OCI-LY7 (cell line): ENCODE measurements at regions of chr11 and their contacts with region 1.

Region 1: DNA sequence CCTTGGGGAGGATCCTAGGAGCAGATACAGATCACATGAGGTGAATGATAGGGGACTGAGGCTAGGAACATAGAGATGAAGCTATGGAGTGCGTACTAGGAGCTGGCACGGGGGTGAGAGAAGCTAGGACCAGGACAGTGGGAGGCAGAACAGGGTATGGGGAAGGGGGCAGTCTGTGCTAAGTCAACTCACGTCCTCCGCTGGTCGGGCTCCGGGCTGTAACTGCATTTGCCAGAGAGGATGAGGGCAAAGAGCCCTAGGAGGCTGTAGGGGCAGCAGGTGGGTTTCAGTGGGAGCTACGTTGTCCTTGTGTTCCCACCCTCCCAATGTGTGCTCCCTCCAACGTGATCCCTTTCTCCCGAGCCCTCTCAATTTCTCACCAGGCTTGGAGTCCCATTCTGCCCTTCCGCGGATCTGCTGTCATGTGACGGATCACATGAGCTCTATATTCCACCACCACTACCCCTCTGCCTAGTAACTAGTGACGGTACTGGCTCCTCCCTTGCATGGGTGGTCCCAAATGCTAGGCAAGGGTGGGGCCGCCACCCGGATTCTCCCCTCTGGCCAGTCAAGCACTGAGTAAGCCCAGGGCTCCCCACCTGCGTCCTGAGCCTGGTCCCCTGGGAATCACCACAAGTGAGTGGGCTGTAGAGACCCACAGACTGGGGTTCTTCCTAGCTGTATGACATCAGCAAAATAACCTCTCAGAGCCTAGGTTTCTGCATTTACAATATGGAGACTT is at the start of gene TPP1:
- DNase-seq: peak; percentile 94
- H3K4me3 ChIP-seq: peak within 1 kb of the TSS; percentile 87
- H3K27ac ChIP-seq: no peak within 1 kb of the TSS
- H3K4me1 ChIP-seq: peaks cover 32% of the 10 kb centered on the region
- CTCF ChIP-seq: no peak
- total RNA-seq, gene TPP1: 11.9 and 16.6 TPM in 2 replicates

Region 2: DNA sequence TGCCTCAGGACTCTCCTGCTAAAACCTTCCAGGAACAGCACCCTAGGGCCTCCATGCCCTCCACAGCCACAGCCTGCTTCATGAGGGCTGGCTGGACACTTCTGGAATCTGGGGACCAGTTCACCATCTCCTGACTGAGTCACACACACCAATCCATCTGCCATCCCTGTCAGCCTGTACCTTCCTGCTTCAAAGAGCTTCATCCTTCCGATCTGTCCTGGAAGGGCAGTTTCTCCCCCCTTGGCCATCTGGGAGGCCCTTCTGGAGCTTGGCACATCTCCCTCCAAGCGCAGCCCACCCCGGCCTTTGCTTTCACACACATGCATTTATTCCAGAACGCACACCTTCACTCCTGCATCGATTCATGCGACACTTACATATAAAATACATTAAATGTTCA is 213.3 kb before region 1 on chr11:
- CTCF ChIA-PET with region 1: no interaction called
- POLR2A ChIA-PET with region 1: no interaction called
- intact Hi-C with region 1: no loop called
- DNase-seq: no peak
- H3K4me3 ChIP-seq: no peak overlapping the region
- H3K27ac ChIP-seq: no peak overlapping the region
- H3K4me1 ChIP-seq: peaks cover 60% of the 10 kb centered on the region
- CTCF ChIP-seq: no peak

Region 3: DNA sequence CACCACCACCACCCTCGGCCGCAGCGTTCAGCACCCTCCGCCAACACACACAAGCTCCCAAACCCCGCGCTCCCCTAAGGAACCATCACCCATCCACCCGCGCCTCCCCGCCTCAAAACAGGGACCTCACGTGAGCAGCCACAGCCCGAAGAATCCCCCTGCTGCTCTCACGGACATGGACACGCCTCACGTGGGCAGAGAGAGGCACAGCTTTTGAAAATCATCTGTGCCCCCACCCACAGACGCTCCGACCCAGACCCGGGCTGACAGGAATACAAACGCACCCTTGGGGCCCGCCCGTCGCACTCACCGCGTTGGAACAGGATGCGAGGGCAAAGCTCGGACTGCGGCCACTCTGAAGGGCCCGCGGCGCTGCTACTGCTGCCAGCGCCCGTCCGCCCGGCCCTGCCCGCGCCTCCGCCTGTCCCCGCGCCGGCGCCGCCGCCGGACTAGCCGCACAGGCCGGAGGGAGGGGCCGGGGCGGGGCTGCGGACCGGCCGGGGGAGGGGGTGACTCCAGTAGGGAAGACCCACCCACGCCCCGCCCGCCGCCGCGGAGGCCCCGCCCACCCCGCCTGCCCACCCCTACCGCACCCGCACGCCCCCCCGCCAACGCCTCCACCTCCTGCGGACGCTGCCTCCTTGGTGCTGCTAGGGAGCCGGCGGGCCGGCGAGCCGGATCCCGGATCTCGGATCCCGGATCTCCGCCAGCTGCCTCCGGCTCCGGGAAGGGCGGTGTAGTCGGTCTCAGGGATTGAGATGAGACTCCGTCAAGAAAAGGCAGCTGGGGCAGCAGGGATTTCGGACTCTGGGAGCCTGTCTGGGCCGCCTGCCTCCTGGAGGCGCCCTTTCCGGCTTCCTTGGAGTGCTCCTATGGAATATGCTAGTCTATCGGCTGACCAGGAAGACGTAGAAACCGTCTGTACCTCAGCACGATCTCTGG is 145.4 kb before region 1 on chr11 and contains the start of gene TRIM3:
- CTCF ChIA-PET with region 1: interaction called, 3 read pairs
- POLR2A ChIA-PET with region 1: interaction called, 10 read pairs
- intact Hi-C with region 1: no loop called
- DNase-seq: peak; percentile 81
- H3K4me3 ChIP-seq: peak within 1 kb of the TSS; percentile 73
- H3K27ac ChIP-seq: no peak within 1 kb of the TSS
- H3K4me1 ChIP-seq: peaks cover 31% of the 10 kb centered on the region
- CTCF ChIP-seq: no peak
- total RNA-seq, gene TRIM3: 8.5 and 21.3 TPM in 2 replicates

Region 4: DNA sequence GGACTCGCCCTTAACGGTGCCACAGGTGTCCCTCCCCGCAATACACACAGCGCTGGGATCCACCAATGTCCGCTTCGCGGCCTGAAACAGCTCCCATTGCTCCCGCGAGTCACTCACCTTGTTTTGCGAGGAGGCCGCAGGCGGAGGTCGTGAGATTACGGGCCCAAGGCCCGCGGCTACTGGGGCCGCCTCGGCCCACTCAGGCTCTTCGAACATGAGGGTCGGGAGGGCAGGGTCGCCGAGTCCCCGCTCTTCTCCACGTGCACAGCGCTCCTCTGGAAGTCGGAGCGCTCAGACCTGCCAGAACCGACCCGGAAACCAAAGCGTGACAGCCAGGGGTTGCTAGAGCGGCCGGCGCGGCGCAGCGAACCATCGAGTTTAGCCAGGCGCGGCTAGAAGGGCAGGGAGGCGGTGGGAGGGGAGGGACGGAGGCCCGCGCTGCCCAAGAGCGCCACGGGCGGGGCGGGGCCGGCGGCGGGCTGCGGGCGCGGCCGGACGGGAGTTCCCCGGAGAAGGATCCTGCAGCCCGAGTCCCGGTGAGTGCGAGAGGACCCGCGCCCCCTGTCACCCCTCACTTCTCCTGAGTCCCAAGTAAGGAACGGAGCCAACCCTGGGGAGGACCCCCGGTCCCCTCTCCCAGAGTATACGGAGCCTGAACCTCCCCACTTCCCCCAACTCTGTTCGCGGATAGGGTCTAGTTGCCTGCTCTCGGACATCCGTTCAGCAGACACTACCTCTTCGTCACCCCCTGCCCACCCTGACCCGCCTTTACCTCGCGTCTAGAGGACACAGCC is 15.7 kb before region 1 on chr11 and contains the starts of genes ILK and RRP8:
- CTCF ChIA-PET with region 1: interaction called, 3 read pairs
- POLR2A ChIA-PET with region 1: interaction called, 10 read pairs
- intact Hi-C with region 1: no loop called
- DNase-seq: peak; percentile 90
- H3K4me3 ChIP-seq: peak within 1 kb of the TSS; percentile 91
- H3K27ac ChIP-seq: peak within 1 kb of the TSS; percentile 67
- H3K4me1 ChIP-seq: peaks cover 47% of the 10 kb centered on the region
- CTCF ChIP-seq: 0 out of 2 replicates have a peak, but pooled peaks have one; percentile 18
- total RNA-seq, gene ILK: 52.0 and 64.8 TPM in 2 replicates
- total RNA-seq, gene RRP8: 26.4 and 29.4 TPM in 2 replicates

Region 5: DNA sequence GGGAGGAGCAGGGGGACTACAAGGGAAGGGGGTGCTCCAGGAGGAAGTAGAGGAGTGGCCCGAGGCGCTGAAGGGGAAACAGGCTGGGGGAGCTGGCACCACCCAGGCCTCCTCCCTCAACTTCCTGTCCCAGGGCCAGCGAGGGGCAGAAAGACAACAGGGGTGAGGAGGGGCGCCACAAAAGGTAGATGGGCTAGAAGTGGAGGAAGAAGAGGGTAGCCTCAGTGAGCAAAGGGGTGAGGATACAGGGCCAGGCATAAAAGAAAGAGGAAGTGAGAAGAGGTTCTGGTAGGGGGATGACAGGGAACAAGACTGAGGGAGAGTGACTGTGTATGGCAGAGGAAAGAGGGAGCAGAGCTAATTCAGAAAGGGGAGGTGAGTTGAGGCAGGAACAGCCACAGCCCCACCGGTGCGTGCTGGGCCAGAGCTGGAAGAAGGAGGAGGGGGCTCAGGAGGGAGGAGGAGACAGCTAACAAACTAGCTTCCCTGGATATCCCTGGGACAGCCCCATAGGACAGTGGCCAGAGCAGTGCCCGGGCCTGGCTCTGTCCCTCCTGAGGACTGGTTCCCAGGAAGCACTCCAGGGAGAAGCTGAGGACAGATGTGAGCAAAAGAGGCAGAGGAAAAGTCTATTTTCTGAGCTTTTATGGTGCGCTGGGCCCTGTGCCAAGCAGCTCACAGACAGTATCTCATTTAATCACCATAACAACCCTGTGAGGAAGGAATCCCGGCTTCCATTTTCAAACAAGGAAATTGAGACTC is 27.9 kb after region 1 on chr11:
- CTCF ChIA-PET with region 1: interaction called, 4 read pairs
- POLR2A ChIA-PET with region 1: interaction called, 13 read pairs
- intact Hi-C with region 1: no loop called
- DNase-seq: peak; percentile 73
- H3K4me3 ChIP-seq: peak overlapping the region; percentile 48
- H3K27ac ChIP-seq: peak overlapping the region; percentile 59
- H3K4me1 ChIP-seq: peaks cover 25% of the 10 kb centered on the region
- CTCF ChIP-seq: no peak